OCI-LY7 (cell line): ENCODE measurements at regions of chr18 and their contacts with region 1.

Region 1: DNA sequence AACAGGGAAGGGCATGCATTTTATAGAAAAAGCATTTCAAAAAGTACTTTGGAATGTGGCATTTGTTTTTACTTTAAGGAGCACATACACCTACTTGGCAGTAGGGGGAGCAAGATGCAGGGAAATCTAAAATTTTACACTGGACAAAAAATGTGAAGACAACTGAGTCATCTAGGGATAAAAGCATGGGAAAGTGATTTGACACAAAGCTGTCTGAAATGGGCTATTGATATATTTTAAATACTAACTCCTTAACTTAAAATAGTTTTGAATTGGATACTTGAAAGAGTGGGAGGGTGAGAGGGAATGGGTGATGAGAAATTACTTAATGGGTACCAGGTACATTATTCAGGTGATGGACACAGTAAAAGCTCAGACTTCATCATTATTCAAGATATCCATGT is 15.8 kb downstream of the TMEM200C start:
- DNase-seq: peak; percentile 22
- H3K4me3 ChIP-seq: no peak overlapping the region
- H3K27ac ChIP-seq: no peak overlapping the region
- H3K4me1 ChIP-seq: no peaks in the 10 kb centered on the region
- CTCF ChIP-seq: peak; percentile 90

Region 2: DNA sequence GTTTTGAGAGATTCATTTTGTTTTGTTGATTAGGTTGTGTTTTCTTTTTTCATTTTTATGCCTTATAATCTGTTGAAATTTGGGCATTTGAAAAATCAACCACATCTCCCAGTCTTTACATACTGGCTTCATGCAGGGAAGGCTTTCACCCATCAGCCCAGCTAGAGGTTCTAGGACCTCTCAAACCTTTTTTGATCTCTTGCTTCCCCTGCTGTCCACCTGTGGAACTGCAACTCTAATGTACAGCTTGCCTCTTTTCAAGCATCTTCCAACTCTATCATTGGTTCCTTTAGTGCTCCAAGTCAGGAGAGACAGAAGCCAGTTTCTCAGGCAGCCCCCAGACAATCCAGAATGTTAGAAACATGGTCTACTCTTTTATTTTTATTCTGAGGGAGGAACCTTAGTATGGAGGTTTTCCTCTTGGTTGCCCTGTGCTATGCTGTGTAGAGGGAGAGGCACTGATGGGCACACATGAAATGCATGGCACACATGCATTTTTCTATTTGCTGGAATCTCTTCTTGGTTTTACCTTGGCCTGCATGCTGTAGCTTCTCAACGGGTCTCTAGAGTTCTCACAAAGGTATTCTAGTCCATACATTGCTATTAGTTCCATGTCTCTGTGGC is 642.4 kb after region 1 on chr18:
- CTCF ChIA-PET with region 1: no interaction called
- POLR2A ChIA-PET with region 1: no interaction called
- intact Hi-C with region 1: loop called (anchors 5 kb)
- DNase-seq: peak; percentile 30
- H3K4me3 ChIP-seq: no peak overlapping the region
- H3K27ac ChIP-seq: no peak overlapping the region
- H3K4me1 ChIP-seq: no peaks in the 10 kb centered on the region
- CTCF ChIP-seq: peak; percentile 79

Region 3: GRCh38 chr18:6885992-6886796 is 1006.7 kb after region 1 on chr18:
- CTCF ChIA-PET with region 1: no interaction called
- POLR2A ChIA-PET with region 1: no interaction called
- intact Hi-C with region 1: loop called (anchors 5 kb)
- DNase-seq: peak; percentile 41
- H3K4me3 ChIP-seq: no peak overlapping the region
- H3K27ac ChIP-seq: no peak overlapping the region
- H3K4me1 ChIP-seq: no peaks in the 10 kb centered on the region
- CTCF ChIP-seq: peak; percentile 86